ENCODE measurements at regions of chr15 and their contacts with region 1.

Region 1: DNA sequence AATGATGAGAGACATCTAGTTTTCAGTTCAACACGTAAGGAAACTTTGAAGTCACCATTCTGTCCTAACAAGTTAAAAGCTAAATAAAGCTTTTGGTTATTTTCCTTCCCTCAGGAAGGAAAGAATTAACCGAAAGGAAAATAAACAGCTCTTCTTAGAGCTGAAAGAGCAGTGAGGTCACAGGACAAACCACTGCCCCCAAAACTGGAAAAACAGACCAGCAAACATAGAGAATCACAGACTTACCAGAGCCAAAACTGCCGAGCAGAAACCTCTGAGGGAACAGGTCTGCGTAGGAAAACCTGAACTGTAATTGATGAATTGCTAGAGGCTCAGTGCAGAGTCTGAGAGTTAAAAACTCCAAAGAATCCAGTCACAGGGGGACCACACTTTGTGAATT is 14.7 kb downstream of the USP50 start:
- DNase-seq: no peak
- ATAC-seq: no peak
- H3K4me3 ChIP-seq: no peak overlapping the region
- H3K4me3 Mint-ChIP-seq: no peak overlapping the region
- H3K27ac ChIP-seq: no peak overlapping the region
- H3K27ac Mint-ChIP-seq: no peak overlapping the region
- H3K4me1 ChIP-seq: no peaks in the 10 kb centered on the region
- H3K4me1 Mint-ChIP-seq: no peaks in the 10 kb centered on the region
- H3K27me3 ChIP-seq: no peaks in the 10 kb centered on the region
- H3K27me3 Mint-ChIP-seq: no peaks in the 10 kb centered on the region
- CTCF ChIP-seq: no peak

Region 2: DNA sequence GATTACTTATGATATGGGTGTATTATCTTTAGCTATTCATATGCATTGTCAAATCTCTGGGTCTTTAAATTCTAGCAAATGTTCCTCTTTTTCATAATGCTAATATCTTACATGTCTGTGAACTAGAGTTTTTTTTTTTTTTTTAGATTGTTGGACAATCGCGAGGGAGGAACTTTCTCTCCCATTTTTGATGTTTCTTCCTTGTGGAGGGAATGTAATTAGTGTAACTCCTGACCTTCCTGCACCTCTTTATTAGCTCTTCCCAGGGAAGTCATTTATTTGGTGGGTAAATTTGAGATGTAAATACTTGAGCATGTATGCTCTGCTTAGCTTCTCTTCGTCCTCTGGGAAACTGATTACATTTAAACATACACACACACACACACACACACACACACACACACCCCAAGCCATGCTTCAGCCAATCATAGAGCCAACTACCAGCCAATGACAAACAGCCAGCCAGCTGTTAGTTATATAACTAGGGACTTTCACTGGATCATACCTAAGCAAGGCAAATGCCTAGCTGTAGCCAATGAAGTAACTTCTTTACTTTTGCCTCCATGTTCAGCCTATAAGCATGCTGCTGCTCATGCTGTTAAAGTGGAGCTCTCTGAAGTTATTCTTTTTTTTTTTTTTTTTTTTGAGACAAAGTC is 115.9 kb before region 1 on chr15:
- CTCF ChIA-PET with region 1: no interaction called
- POLR2A ChIA-PET with region 1: interaction called, 10 read pairs
- intact Hi-C with region 1: no loop called
- DNase-seq: no peak
- ATAC-seq: no peak
- H3K4me3 ChIP-seq: no peak overlapping the region
- H3K4me3 Mint-ChIP-seq: no peak overlapping the region
- H3K27ac ChIP-seq: no peak overlapping the region
- H3K27ac Mint-ChIP-seq: no peak overlapping the region
- H3K4me1 ChIP-seq: no peaks in the 10 kb centered on the region
- H3K4me1 Mint-ChIP-seq: no peaks in the 10 kb centered on the region
- H3K27me3 ChIP-seq: no peaks in the 10 kb centered on the region
- H3K27me3 Mint-ChIP-seq: no peaks in the 10 kb centered on the region
- CTCF ChIP-seq: no peak

Measured in B cell (primary cell).